ENCODE measurements at regions of chr7 and their contacts with region 1.

Region 1: DNA sequence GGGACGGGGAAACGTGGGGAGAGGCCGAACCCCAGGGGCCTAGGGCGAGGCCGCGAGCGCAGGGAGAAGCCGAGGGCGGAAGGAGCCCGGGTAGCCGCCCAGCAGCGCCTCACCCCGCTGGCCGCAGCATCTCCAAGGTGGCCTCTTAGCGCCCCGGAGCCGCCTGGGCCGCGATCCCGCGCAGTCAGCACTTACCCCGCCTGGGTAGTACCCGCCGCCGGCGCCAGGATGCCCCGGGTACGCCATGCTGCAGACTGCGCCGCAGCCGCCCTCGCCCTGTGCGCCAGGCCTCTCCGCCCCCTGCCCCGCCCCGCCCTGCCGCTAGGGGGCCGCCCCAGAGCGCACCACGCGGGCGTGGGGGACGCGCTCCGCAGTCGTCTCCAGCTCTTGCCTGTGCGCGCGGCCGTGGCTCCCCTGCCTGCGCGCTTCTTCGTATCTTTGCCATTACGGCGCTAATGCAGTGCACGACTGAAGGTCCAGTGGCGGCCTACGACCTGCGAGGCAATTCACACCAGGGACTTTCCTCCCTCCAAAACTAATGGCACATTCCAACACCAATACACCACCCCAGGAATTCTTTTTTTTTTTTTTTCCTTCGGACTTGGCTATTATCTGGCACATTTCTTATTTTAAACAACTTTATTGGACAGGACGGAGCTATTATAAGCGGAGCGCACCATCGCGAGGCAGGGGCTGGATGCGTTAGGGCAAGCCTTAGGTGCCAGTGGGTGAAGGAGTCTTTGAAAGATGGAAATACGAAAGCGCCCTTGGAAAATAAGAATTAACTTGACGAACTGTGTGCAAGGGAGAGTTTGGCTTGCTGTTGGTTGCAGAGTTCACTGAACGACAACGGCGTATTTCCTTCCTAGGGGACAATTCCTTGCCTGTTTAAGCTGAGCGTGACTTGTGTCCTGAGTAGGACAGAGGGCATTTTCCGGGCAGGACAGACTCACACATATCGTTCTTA is at the start of gene SRI:
- DNase-seq: peak; percentile 87
- H3K4me3 ChIP-seq: peak within 1 kb of the TSS; percentile 82
- H3K27ac ChIP-seq: peak within 1 kb of the TSS; percentile 63
- H3K4me1 ChIP-seq: peaks cover 20% of the 10 kb centered on the region
- CTCF ChIP-seq: peak; percentile 72
- total RNA-seq, gene SRI: 61.7 and 73.9 TPM in 2 replicates

Region 2: DNA sequence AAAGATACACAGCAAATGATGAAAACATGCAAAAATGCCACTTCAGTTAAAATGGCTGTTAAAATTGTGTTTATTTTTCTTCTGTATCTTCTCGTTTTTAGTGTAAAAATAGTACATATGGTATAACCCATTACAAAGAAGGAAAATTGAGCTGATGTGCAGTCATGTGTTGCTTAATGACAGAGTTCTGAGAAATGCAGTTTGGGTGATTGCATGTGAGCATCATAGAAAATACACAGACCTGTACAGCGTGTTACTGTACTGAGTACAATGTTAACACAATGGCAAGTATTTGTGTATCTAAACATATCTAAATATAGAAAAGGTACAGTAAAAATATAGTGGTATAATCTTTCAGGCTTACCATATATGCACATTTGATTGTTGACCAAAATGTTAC is 1060.5 kb before region 1 on chr7:
- CTCF ChIA-PET with region 1: no interaction called
- POLR2A ChIA-PET with region 1: interaction called, 3 read pairs
- intact Hi-C with region 1: loop called (anchors 5 kb)
- DNase-seq: peak; percentile 16
- H3K4me3 ChIP-seq: peak overlapping the region; percentile 5
- H3K27ac ChIP-seq: peak overlapping the region; percentile 14
- H3K4me1 ChIP-seq: peaks cover 56% of the 10 kb centered on the region
- CTCF ChIP-seq: no peak

Region 3: DNA sequence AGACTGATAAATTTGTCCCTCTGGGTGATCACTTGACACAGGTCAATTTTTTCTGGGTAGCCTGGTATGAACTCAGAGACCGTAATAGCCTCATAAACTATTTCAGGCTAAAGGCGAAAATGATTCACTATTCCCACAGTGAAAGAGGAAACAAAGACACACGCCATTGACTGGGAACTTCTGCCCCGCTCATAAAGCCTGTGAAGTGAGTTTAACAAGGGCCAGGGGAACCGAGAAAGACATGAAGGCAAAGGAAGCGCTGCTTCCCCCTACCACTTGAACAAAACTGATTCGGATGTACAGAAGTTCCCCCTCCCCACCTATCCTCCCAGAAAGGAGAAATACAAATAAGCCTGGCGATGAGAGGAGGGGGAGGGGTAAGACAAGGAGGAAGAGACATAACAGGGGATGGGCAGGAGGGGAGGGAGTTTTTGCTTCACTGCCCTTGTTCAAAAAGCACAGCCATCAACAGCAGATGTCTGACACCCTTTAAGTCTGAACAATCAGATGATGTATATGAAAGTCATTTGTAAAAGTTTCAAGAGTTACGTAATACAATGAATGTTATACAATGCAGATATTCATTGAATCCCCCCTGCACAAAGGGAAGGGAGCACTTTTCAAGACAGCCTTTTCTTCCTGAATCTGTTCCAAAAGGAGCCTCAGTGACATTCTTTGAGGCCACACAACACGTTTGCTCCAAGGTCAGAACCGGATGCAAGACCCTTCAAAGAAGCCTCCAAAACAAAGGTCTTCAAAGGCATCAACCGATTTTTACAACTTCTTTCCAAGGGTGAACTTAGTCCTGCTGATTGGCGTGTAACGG is 745.3 kb before region 1 on chr7:
- CTCF ChIA-PET with region 1: no interaction called
- POLR2A ChIA-PET with region 1: no interaction called
- intact Hi-C with region 1: loop called (anchors 10 kb)
- DNase-seq: peak; percentile 82
- H3K4me3 ChIP-seq: peak overlapping the region; percentile 62
- H3K27ac ChIP-seq: peak overlapping the region; percentile 26
- H3K4me1 ChIP-seq: peaks cover 18% of the 10 kb centered on the region
- CTCF ChIP-seq: no peak

Region 4: DNA sequence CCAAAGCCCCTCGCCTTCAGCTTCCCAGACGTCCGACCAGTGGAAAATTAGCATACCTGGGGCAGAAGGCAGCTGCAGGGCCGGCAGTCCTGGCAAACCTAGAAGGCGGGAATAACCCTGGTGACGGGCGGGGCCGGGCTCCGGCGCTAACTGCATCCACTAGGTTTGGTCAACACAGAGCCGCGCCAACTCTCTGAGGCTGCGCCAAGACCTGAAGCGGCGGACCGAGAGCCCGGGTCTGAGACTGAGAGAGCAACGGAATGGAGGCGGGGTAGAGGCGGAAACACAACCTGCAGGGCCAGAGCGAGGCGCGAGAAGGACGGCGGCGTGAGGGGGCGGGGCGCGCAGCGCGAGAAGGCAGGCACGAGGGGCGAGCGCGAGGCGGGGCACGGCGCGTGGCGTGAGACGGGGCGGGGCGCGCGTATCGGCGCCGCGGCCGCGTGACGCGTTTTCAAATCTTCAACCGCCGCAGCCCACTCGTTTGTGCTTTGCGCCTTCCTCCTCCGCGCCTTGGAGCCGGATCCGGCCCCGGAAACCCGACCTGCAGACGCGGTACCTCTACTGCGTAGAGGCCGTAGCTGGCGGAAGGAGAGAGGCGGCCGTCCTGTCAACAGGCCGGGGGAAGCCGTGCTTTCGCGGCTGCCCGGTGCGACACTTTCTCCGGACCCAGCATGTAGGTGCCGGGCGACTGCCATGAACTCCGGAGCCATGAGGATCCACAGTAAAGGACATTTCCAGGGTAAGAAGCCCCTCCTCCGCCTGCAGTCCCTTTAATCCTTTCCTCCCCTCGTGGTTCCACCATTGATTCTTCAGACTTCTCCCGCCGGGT is 343.8 kb before region 1 on chr7 and contains the starts of genes DBF4 and SLC25A40:
- CTCF ChIA-PET with region 1: no interaction called
- POLR2A ChIA-PET with region 1: interaction called, 3 read pairs
- intact Hi-C with region 1: loop called (anchors 2 kb)
- DNase-seq: peak; percentile 96
- H3K4me3 ChIP-seq: peak within 1 kb of the TSS; percentile 94
- H3K27ac ChIP-seq: peak within 1 kb of the TSS; percentile 99
- H3K4me1 ChIP-seq: peaks cover 29% of the 10 kb centered on the region
- CTCF ChIP-seq: no peak
- total RNA-seq, gene DBF4: 83.9 and 99.2 TPM in 2 replicates
- total RNA-seq, gene SLC25A40: 21.0 and 22.0 TPM in 2 replicates

Region 5: GRCh38 chr7:88204525-88205112 is 15.4 kb before region 1 on chr7:
- CTCF ChIA-PET with region 1: no interaction called
- POLR2A ChIA-PET with region 1: interaction called, 21 read pairs
- intact Hi-C with region 1: no loop called
- DNase-seq: no peak
- H3K4me3 ChIP-seq: no peak overlapping the region
- H3K27ac ChIP-seq: no peak overlapping the region
- H3K4me1 ChIP-seq: no peaks in the 10 kb centered on the region
- CTCF ChIP-seq: no peak